ENCODE measurements at regions of chr7 and their contacts with region 1.

Region 1: DNA sequence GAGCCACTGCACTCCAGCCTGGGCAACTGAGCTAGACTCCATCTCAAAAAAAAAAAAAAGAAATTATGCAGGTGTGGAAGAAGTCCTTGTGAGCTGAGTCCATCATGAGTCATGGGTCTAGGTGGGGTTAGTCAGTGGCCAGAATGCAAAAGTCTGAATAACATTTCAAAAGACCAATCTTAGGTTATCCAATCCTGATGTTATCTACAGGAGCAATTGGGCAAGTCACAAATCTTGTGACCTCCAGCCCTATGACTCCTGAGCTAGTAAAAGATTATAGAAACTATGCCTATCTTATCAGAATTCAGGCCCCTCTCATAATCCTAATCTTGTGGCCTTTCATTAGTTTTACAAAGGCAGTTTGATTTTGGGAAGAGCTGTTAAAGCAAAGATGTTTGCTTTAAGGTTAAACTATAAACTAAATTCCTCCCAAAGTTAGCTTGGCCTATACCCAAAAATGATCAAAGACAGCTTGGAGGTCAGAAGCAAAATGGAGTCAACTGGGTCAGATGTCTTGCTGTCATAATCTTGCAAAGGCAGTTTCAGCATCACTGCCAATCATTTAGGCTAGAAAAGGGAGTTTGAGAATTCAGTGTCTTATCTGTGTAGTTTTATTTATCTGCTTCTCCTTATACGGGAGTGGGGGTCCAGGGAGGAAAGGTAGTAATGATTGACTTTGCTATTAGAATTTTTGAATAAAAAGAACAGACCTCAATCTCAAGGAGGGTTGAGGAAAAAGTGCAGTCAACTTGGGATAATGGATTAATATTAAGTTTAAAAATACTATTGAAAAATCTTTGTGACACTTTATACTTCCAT is 71.2 kb upstream of the TRIM24 start:
- DNase-seq: peak; percentile 98
- ATAC-seq: peak; percentile 92
- H3K4me3 ChIP-seq: no peak overlapping the region
- H3K27ac ChIP-seq: peak overlapping the region; percentile 61
- H3K4me1 ChIP-seq: peaks cover 65% of the 10 kb centered on the region
- H3K27me3 ChIP-seq: no peaks in the 10 kb centered on the region
- CTCF ChIP-seq: no peak
- EP300 ChIP-seq: peak in 1 of 2 experiments; percentile 99; a peak in 2 of 4 replicates
- POLR2A ChIP-seq: no peak
- RAD21 ChIP-seq: no peak

Region 2: GRCh38 chr7:138161600-138162081 is 227.2 kb before region 1 on chr7:
- CTCF ChIA-PET with region 1: no interaction called
- POLR2A ChIA-PET with region 1: interaction called, 5 read pairs
- in situ Hi-C with region 1: no loop called
- intact Hi-C with region 1: loop called (anchors 10 kb)
- DNase-seq: peak; percentile 95
- ATAC-seq: peak; percentile 88
- H3K4me3 ChIP-seq: no peak overlapping the region; a peak in 1 of 6 replicates
- H3K27ac ChIP-seq: peak overlapping the region; percentile 21
- H3K4me1 ChIP-seq: peaks cover 59% of the 10 kb centered on the region
- H3K27me3 ChIP-seq: no peaks in the 10 kb centered on the region
- CTCF ChIP-seq: peak; percentile 94
- EP300 ChIP-seq: peak in 1 of 2 experiments; percentile 55; a peak in 2 of 4 replicates
- POLR2A ChIP-seq: no peak
- RAD21 ChIP-seq: peak; percentile 92

Region 3: DNA sequence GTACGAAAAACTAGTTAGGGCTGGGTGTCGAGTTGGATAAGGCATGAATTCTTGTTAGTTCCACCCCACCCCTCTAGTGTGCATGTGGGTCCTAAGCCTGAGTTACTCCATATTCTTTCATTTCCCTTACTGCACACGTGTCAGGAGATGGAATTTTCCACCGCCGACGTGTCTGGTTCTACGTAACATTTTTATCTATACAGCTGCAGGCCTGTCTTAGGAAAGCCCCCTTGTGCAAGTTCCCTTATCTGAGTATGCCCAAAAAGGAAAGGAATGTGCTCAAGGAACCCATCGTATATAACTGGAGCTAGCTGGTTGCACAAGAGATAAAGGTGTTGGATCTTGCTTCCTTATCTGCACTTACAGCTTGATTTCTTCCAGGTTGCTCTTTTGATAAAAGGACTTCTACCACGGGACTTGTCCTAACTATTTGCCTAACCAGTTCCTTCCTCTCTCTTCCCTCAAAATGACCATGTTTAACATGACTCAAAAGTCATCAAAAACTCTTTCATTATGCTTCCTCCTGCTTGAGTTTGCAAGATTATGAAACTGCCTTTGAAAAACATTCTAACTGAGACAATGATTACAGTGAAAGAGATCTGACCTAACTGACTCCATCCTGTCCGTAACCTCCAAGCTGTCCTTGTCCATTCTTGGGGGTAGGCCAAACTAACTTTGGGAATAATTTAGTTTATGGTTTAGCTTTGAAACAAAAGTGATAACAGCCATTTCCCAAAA is 131.3 kb before region 1 on chr7:
- CTCF ChIA-PET with region 1: no interaction called
- POLR2A ChIA-PET with region 1: interaction called, 8 read pairs
- in situ Hi-C with region 1: no loop called
- intact Hi-C with region 1: loop called (anchors 5 kb)
- DNase-seq: peak; percentile 99
- ATAC-seq: peak; percentile 95
- H3K4me3 ChIP-seq: no peak overlapping the region
- H3K27ac ChIP-seq: peak overlapping the region; percentile 93
- H3K4me1 ChIP-seq: peaks cover 43% of the 10 kb centered on the region
- H3K27me3 ChIP-seq: no peaks in the 10 kb centered on the region
- CTCF ChIP-seq: no peak
- EP300 ChIP-seq: peak; percentile 91 to 98
- POLR2A ChIP-seq: no peak
- RAD21 ChIP-seq: peak; percentile 83

Region 4: DNA sequence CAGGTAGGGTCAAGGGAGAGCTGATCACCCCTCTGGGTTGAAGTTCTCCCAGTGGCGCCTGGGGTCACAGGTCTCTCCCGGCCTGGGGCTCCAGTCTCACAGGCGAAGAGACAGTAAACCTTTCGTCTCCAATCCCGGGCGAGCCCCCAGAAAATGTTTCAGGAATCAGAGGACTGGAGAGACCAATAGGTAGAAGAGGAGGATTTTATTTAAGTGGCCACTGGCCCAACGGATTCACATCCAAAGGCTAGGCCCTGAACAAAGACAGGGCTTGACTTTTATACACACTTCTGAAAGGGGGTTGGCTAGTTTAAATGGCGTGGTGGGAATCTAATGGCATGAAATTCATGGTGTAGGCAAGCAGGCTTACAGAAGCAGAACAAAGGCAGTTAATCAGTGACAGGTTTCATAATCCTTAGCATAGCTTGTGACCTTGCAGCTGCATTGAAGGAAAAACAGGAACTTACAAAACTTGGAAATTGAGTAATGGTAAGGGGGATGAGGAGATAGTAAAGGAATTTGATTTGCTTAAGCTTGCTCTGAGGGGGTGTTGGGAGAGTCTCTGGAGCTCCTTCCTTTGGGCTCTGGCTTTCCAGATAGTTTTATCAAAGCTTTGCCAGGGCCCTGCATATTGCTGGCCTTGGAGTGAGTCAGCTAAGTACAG is 176.7 kb after region 1 on chr7:
- CTCF ChIA-PET with region 1: no interaction called
- POLR2A ChIA-PET with region 1: interaction called, 10 read pairs
- in situ Hi-C with region 1: no loop called
- intact Hi-C with region 1: no loop called
- DNase-seq: peak; percentile 98
- ATAC-seq: peak; percentile 82
- H3K4me3 ChIP-seq: 0 out of 6 replicates have a peak overlapping the region, but pooled peaks of 1 of the 3 experiments have one; percentile 34
- H3K27ac ChIP-seq: peak overlapping the region; percentile 92
- H3K4me1 ChIP-seq: peaks cover 70% of the 10 kb centered on the region
- H3K27me3 ChIP-seq: no peaks in the 10 kb centered on the region
- CTCF ChIP-seq: no peak
- EP300 ChIP-seq: peak in 1 of 2 experiments; percentile 96; a peak in 2 of 4 replicates
- POLR2A ChIP-seq: no peak; a peak in 1 of 4 replicates
- RAD21 ChIP-seq: 0 out of 2 replicates have a peak, but pooled peaks have one; percentile 4

Measured in HepG2 (cell line).